Heart left ventricle (tissue), 16 donors: ENCODE measurements at regions of chr3 and their contacts with region 1.

Region 1: DNA sequence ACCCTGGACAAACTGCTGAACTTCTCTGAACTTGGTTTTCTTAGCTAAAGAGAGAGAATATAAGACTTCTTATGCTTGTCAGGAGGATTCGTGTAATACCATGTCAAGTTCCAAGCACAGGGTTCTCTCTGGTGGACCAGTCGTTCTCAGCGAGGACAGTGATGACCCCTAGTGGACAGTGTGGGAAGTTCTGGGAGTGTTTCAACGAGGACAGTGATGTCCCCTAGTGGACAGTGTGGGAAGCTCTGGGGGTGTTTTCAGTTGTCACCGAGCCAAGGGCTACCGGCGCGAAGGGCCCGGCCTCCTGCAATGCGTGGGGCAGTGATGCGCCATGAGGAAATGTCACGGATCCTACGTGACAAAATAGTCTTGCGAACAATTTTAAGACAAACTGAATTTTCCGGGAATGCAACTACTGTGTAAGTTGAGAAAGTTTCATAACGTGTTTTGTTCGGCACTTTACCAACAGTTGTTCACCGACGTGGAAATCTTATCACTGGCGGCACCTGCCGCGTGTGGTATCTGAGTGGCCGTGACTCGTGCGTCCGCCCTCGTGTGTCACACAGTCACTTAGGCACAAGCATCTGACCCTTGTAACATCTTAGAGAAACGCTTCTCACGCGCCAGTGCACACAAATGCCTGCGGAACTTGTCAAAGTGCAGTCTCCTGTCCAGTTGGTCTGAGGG is 39.3 kb upstream of the MUC4 start:
- DNase-seq: peak; percentile 78 to 88 (median 84)
- ATAC-seq: peak; percentile 83 to 96 (median 93)
- H3K4me3 ChIP-seq: peak overlapping the region in 1 of 12 donors; percentile 23
- H3K27ac ChIP-seq: no peak overlapping the region
- H3K4me1 ChIP-seq: peaks cover 0 to 6% (median 2%) of the 10 kb centered on the region in 12 donors
- H3K27me3 ChIP-seq: peaks cover 0 to 4% (median 0%) of the 10 kb centered on the region in 9 donors
- CTCF ChIP-seq: peak; percentile 99 to 100 (median 100)
- POLR2A ChIP-seq: no peak

Region 2: DNA sequence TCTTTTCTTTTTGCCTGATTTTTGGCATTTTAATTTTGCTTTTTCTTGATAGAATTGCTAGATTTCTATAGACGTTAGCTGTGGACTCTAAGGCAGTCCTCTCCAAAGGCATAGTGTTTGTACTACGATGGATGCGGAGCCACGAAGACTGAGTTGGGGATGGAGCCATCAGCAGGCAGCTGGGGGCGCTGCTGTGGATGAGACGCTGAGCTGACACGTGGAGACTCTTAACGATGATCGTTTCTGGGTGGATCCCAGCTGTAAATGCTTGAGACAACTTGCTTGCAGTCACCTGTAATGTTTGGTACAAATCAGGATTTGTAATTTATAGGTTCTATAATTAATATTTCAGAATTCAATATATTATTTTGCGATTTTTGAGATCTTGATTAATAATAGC is 294.6 kb before region 1 on chr3:
- intact Hi-C with region 1: loop called in 1 of 10 experiments (anchors 2 kb)
- DNase-seq: no peak
- ATAC-seq: no peak
- H3K4me3 ChIP-seq: no peak overlapping the region
- H3K27ac ChIP-seq: no peak overlapping the region
- H3K4me1 ChIP-seq: peaks cover 0 to 14% (median 3%) of the 10 kb centered on the region in 12 donors
- H3K27me3 ChIP-seq: no peaks in the 10 kb centered on the region
- CTCF ChIP-seq: peak in 7 of 12 donors; percentile 9 to 51 (median 31)
- POLR2A ChIP-seq: no peak